Sciatic nerve (tissue), 2 donors: ENCODE measurements at regions of chr18 and their contacts with region 1.

Region 1: DNA sequence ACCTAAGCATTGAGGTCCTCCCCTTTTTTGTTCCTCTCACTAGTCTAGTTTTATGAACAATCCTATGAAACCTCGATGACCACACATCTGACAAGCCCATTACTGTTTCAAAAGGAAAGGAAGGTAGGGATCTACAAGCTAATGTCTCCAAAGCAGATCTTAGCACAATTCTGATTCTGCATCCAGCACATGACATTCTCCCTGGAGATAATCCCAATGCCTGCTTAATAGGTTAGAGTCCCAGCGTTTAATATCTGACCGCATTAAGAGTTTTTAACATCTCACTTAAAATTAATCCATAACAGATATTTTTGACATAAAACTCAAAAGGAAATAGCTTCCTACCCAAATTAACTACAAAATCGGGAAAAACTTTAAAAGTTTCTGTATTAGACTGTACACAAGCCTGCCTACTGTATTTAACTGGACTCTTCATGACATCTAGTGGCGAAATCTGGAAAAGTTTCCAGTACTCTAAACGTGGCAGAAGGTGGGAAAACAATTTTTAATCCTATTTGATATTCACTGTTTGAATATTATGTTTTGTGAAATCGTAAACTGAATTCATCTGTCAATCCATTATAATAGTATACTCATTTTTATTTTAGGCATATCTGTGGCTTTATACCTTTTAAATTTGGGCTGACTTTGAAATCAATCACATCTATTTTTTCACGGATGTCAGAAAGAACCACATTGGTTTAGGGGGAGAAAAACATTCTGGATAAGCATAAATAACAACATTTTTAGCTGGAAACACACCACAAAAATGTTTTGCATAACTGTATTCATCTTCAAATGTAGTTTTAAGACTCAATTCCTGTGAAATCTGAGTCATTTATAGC is 62.4 kb downstream of the TXNL1 start:
- DNase-seq: no peak
- ATAC-seq: peak; percentile 90

Region 2: GRCh38 chr18:55234366-55235093 is 1341.5 kb before region 1 on chr18:
- intact Hi-C with region 1: loop called (anchors 10 kb)
- DNase-seq: peak; percentile 86
- ATAC-seq: peak; percentile 82

Region 3: DNA sequence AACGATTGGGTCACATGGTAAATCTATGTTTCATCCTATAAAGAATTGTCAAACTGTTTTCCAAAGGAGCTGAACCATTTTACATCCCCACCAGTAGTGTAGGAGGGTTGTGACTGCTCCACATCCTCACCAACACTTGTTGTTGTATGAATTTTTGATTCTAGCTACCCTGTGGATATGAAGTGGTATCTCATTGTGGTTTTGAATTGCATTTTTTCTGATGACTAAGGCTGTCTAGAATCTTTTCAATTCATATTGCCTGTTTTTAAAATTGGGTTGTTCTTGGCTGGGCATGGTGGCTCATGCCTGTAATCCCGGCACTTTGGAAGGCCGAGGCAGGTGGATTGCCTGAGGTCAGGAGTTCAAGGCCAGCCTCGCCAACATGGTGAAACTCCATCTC is 17.9 kb after region 1 on chr18:
- intact Hi-C with region 1: no loop called
- DNase-seq: no peak
- ATAC-seq: no peak

Region 4: DNA sequence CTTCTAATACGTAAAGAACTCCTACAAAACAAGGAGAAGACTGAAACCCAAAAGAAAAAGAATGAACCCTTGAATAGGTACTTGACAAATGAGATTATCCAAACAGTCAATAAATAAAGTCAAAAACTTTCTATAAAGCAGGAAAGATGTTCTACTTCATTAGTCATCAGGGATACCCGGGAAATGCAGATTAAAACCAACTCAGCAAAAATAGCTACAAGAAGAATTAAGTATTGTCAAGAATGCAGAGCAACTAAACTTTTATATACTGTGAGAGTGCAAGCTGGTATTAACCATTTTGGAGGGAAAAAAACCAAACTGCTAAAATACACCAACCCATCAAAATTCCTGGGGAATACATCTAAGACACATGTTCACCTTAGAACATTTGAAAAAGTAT is 52.0 kb after region 1 on chr18:
- intact Hi-C with region 1: no loop called
- DNase-seq: no peak
- ATAC-seq: no peak